ENCODE measurements at regions of chr14 and their contacts with region 1.

Region 1: DNA sequence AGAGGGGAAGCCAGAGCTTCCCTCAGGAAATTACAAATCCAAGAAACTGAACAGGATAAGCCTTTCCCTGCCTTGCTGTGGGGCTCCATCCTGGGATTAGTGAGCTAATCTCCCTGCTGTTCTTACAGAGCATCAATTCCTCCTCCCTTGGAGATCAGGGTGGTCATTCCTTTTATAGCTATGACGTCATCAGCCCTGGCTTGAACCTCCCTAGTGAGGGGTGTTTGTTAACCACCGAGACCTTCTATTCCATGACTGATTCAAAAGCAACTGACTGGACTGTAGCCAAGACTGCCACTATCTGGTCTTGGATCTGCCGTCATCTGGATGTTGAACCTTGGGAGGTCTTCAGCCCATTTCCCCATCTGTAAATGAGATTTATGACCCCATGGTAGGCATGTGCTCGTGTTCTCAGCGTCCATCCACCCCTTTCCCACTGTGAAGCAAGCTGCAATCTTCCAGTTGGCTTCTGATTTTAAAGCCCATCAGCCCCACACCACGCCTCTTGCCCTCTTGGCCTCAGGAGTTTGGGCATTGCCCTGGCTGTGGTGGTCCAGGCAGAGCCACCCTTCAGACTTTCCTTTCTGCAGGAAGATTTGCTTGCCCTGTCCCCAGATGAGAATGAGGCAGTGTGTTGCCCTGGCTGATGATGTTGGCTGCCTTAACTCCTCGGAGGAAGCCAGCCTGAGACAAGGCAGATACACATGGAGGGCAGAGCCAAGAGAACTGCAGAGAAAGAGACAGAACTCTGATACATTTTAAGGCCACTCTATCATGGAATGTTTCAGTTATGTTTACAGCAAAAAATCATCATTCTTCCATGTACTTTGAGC is 59.6 kb upstream of the ACTN1 start:
- DNase-seq: peak; percentile 98
- H3K4me3 ChIP-seq: no peak overlapping the region
- H3K27ac ChIP-seq: peak overlapping the region; percentile 93
- H3K4me1 ChIP-seq: peaks cover 60% of the 10 kb centered on the region
- H3K27me3 ChIP-seq: no peaks in the 10 kb centered on the region
- CTCF ChIP-seq: no peak
- POLR2A ChIP-seq: no peak

Region 2: GRCh38 chr14:68939893-68940613 is 98.6 kb before region 1 on chr14:
- CTCF ChIA-PET with region 1: interaction called, 13 read pairs
- POLR2A ChIA-PET with region 1: interaction called, 3 read pairs
- dilution Hi-C with region 1: no loop called
- intact Hi-C with region 1: loop called (anchors 2 kb)
- DNase-seq: peak; percentile 98
- H3K4me3 ChIP-seq: no peak overlapping the region
- H3K27ac ChIP-seq: peak overlapping the region; percentile 88
- H3K4me1 ChIP-seq: peaks cover 61% of the 10 kb centered on the region
- H3K27me3 ChIP-seq: no peaks in the 10 kb centered on the region
- CTCF ChIP-seq: no peak
- POLR2A ChIP-seq: peak; percentile 51

Region 3: GRCh38 chr14:69013943-69014775 is 24.5 kb before region 1 on chr14:
- CTCF ChIA-PET with region 1: interaction called, 9 read pairs
- POLR2A ChIA-PET with region 1: interaction called, 4 read pairs
- dilution Hi-C with region 1: no loop called
- intact Hi-C with region 1: loop called (anchors 2 kb)
- DNase-seq: peak; percentile 64
- H3K4me3 ChIP-seq: no peak overlapping the region
- H3K27ac ChIP-seq: no peak overlapping the region
- H3K4me1 ChIP-seq: peaks cover 15% of the 10 kb centered on the region
- H3K27me3 ChIP-seq: no peaks in the 10 kb centered on the region
- CTCF ChIP-seq: no peak
- POLR2A ChIP-seq: no peak

Region 4: DNA sequence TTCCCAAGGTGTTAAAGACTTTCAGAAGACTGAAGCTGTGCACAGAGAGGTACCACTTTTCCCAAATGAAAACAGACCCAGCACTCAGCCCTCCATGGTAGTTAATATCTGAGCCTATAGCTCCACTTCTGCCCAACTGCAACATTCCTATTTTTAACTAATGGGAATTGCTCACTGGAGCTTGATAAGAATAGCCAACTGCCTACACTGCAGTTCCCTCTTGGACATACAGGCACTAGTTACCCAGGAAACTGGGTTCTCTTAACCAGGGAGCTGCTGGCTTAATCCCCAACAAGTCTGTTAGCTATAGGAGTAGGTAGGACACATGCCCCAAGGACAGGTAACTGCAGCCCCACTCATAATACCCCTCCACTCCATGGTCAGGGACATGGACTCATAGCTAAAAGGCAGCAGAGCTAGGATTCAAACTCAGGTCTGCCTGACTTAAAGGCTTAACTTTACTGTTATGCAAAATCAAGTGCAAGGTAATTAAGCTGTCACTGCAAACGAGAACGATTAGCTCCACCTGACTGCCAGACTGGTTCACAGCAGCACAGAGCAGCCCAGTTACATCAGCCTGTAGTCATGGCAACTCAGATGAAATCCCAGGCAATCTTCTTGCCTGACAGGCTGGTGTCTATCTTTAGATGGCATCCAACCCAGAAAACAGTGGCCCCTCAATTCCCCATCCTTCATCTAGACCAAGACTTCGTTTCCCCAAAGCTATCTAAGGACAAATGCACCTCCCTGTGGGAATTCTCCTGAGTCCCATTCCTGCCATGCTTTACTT is 17.5 kb after region 1 on chr14:
- CTCF ChIA-PET with region 1: interaction called, 25 read pairs
- POLR2A ChIA-PET with region 1: interaction called, 3 read pairs
- dilution Hi-C with region 1: no loop called
- intact Hi-C with region 1: loop called (anchors 1 kb)
- DNase-seq: peak; percentile 53
- H3K4me3 ChIP-seq: no peak overlapping the region
- H3K27ac ChIP-seq: peak overlapping the region; percentile 83
- H3K4me1 ChIP-seq: peaks cover 57% of the 10 kb centered on the region
- H3K27me3 ChIP-seq: no peaks in the 10 kb centered on the region
- CTCF ChIP-seq: peak in 1 of 2 donors; percentile 6
- POLR2A ChIP-seq: no peak

Region 5: GRCh38 chr14:69090187-69090789 is 51.6 kb after region 1 on chr14:
- CTCF ChIA-PET with region 1: interaction called, 24 read pairs
- POLR2A ChIA-PET with region 1: no interaction called
- dilution Hi-C with region 1: no loop called
- intact Hi-C with region 1: no loop called
- DNase-seq: peak; percentile 59
- H3K4me3 ChIP-seq: no peak overlapping the region
- H3K27ac ChIP-seq: no peak overlapping the region
- H3K4me1 ChIP-seq: peaks cover 19% of the 10 kb centered on the region
- H3K27me3 ChIP-seq: no peaks in the 10 kb centered on the region
- CTCF ChIP-seq: peak; percentile 57 to 66
- POLR2A ChIP-seq: no peak

Region 6: GRCh38 chr14:69117020-69117767 is 78.5 kb after region 1 on chr14:
- CTCF ChIA-PET with region 1: no interaction called
- POLR2A ChIA-PET with region 1: no interaction called
- dilution Hi-C with region 1: no loop called
- intact Hi-C with region 1: no loop called
- DNase-seq: no peak
- H3K4me3 ChIP-seq: no peak overlapping the region
- H3K27ac ChIP-seq: no peak overlapping the region
- H3K4me1 ChIP-seq: no peaks in the 10 kb centered on the region
- H3K27me3 ChIP-seq: no peaks in the 10 kb centered on the region
- CTCF ChIP-seq: no peak
- POLR2A ChIP-seq: no peak